CD8-positive, alpha-beta memory T cell (primary cell): ENCODE measurements at regions of chr13 and their contacts with region 1.

Region 1: GRCh38 chr13:94312511-94313216 is 166.8 kb downstream of the DCT start:
- DNase-seq: peak in 2 of 5 donors; percentile 14 to 56
- H3K4me3 ChIP-seq: no peak overlapping the region
- H3K4me3 Mint-ChIP-seq: peak overlapping the region; percentile 41 to 90 (median 72)
- H3K27ac ChIP-seq: peak overlapping the region; percentile 39
- H3K27ac Mint-ChIP-seq: peak overlapping the region; percentile 53 to 97 (median 90)
- H3K4me1 ChIP-seq: no peaks in the 10 kb centered on the region
- H3K4me1 Mint-ChIP-seq: peaks cover 23 to 35% (median 33%) of the 10 kb centered on the region in 3 donors
- H3K27me3 ChIP-seq: no peaks in the 10 kb centered on the region
- H3K27me3 Mint-ChIP-seq: peaks cover 0 to 2% of the 10 kb centered on the region in 2 donors

Region 2: GRCh38 chr13:94112227-94112626 is 200.4 kb before region 1 on chr13:
- CTCF ChIA-PET with region 1: no interaction called
- POLR2A ChIA-PET with region 1: no interaction called
- DNase-seq: no peak
- H3K4me3 ChIP-seq: no peak overlapping the region
- H3K4me3 Mint-ChIP-seq: no peak overlapping the region
- H3K27ac ChIP-seq: no peak overlapping the region
- H3K27ac Mint-ChIP-seq: no peak overlapping the region
- H3K4me1 ChIP-seq: no peaks in the 10 kb centered on the region
- H3K4me1 Mint-ChIP-seq: no peaks in the 10 kb centered on the region
- H3K27me3 ChIP-seq: no peaks in the 10 kb centered on the region
- H3K27me3 Mint-ChIP-seq: peaks cover 4 to 7% of the 10 kb centered on the region in 2 donors

Region 3: GRCh38 chr13:94323764-94324758 is 11.4 kb after region 1 on chr13:
- CTCF ChIA-PET with region 1: interaction called, 10 read pairs
- POLR2A ChIA-PET with region 1: interaction called, 8 read pairs
- DNase-seq: peak in 4 of 5 donors; percentile 7 to 71 (median 56)
- H3K4me3 ChIP-seq: peak overlapping the region; percentile 2
- H3K4me3 Mint-ChIP-seq: peak overlapping the region; percentile 64 to 88 (median 78)
- H3K27ac ChIP-seq: no peak overlapping the region
- H3K27ac Mint-ChIP-seq: peak overlapping the region; percentile 72 to 98 (median 94)
- H3K4me1 ChIP-seq: peaks cover 63% of the 10 kb centered on the region
- H3K4me1 Mint-ChIP-seq: peaks cover 62 to 73% (median 72%) of the 10 kb centered on the region in 3 donors
- H3K27me3 ChIP-seq: no peaks in the 10 kb centered on the region
- H3K27me3 Mint-ChIP-seq: no peaks in the 10 kb centered on the region

Region 4: DNA sequence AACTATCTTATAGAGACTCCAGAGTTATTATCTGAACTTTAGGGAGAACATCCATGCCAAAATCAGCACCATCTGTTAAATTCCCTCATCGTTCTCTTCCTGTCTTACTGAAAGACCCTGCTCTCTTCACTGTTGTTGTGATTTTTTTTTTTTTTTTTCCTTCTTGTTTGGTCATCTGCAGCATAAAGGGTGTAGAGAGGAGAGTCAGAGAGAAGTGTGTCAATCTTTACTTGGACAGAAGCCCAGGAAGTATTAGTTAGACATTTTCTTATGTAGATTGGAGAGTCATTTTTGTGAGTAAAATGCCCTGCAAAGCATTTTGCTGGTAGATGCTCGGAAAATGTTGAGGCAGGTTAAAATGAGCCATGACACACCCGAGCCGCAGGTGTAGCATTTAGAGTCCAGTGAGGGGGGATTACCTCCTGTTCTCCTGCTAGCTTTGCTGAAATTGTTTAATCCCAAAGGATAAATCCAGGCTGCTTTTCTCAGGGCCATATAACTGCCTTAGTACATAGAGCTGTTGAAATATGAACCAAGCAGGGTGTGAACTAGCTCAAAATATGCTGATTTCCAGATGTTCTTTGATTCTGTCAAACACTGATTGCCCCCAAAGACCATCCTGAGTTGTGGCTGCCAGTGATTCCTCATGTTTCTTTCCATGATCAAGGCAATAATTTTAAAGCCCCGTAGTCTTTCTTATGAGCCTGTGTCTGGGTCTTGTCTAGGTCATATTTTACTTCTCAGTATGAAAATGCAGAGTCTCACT is 23.3 kb after region 1 on chr13:
- CTCF ChIA-PET with region 1: no interaction called
- POLR2A ChIA-PET with region 1: no interaction called
- DNase-seq: no peak
- H3K4me3 ChIP-seq: no peak overlapping the region
- H3K4me3 Mint-ChIP-seq: no peak overlapping the region
- H3K27ac ChIP-seq: no peak overlapping the region
- H3K27ac Mint-ChIP-seq: no peak overlapping the region
- H3K4me1 ChIP-seq: peaks cover 8% of the 10 kb centered on the region
- H3K4me1 Mint-ChIP-seq: peaks cover 7% of the 10 kb centered on the region in 3 donors
- H3K27me3 ChIP-seq: no peaks in the 10 kb centered on the region
- H3K27me3 Mint-ChIP-seq: peaks cover 5 to 21% of the 10 kb centered on the region in 2 donors